ENCODE measurements at regions of chr4 and their contacts with region 1.

Region 1: GRCh38 chr4:43339435-43339834 is 446.9 kb downstream of the GRXCR1 start:
- DNase-seq: no peak
- H3K4me3 Mint-ChIP-seq: no peak overlapping the region
- H3K27ac Mint-ChIP-seq: no peak overlapping the region
- H3K4me1 Mint-ChIP-seq: no peaks in the 10 kb centered on the region
- H3K27me3 Mint-ChIP-seq: no peaks in the 10 kb centered on the region
- CTCF ChIP-seq: no peak

Region 2: GRCh38 chr4:43379016-43379415 is 39.6 kb after region 1 on chr4:
- CTCF ChIA-PET with region 1: no interaction called
- intact Hi-C with region 1: loop called (anchors 2 kb)
- DNase-seq: no peak
- H3K4me3 Mint-ChIP-seq: no peak overlapping the region
- H3K27ac Mint-ChIP-seq: no peak overlapping the region
- H3K4me1 Mint-ChIP-seq: no peaks in the 10 kb centered on the region
- H3K27me3 Mint-ChIP-seq: no peaks in the 10 kb centered on the region
- CTCF ChIP-seq: no peak